ENCODE measurements at regions of chr9 and their contacts with region 1.

Region 1: DNA sequence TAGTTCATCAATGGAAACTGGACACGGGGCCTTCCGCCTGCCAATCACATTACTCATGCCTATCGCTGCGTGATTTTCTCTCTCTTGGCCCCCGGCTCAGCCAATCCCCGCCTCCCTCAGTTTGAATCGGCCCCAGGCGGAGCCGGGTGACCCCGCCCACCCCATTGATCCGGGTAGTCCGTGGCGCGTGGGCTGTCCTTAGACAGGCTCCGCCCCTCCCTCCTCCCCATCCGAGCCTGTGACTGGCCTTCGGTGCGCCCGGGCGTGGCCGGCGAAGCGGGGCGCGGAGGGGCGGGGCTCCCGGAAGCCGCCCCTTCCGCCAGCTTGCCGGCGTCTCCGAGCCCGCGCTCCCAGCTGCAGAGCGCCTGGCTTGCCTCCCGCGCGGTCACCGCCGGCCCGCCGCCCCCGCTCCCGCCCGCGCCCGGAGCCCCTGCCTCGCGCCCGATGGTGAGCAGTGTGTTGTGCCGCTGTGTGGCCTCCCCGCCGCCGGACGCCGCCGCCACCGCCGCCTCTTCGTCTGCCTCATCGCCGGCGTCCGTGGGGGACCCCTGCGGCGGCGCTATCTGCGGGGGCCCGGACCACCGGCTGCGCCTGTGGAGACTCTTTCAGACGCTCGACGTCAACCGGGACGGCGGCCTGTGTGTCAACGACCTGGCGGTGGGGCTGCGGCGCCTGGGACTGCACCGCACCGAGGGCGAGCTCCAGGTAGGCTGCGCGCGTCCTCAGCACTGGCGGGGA is at the start of gene SLC25A25:
- DNase-seq: peak; percentile 100
- ATAC-seq: peak; percentile 82
- H3K4me3 ChIP-seq: peak within 1 kb of the TSS; percentile 74 to 100 (median 98)
- H3K4me3 Mint-ChIP-seq: no peak within 1 kb of the TSS
- H3K27ac ChIP-seq: peak within 1 kb of the TSS; percentile 82 to 95
- H3K27ac Mint-ChIP-seq: peak within 1 kb of the TSS; percentile 88
- H3K4me1 ChIP-seq: peaks cover 59 to 74% of the 10 kb centered on the region in 2 donors
- H3K4me1 Mint-ChIP-seq: peaks cover 58% of the 10 kb centered on the region
- H3K27me3 ChIP-seq: no peaks in the 10 kb centered on the region
- H3K27me3 Mint-ChIP-seq: no peaks in the 10 kb centered on the region
- CTCF ChIP-seq: no peak
- total RNA-seq, gene SLC25A25: 12.1 and 12.4 TPM in 2 replicates

Region 2: GRCh38 chr9:127450830-127451724 is 617.0 kb before region 1 on chr9 and contains the starts of genes LRSAM1 and RPL12:
- CTCF ChIA-PET with region 1: no interaction called
- POLR2A ChIA-PET with region 1: no interaction called
- intact Hi-C with region 1: loop called (anchors 5 kb)
- DNase-seq: peak; percentile 98
- ATAC-seq: peak; percentile 79
- H3K4me3 ChIP-seq: peak within 1 kb of the TSS; percentile 73 to 92 (median 82)
- H3K4me3 Mint-ChIP-seq: peak within 1 kb of the TSS; percentile 97
- H3K27ac ChIP-seq: peak within 1 kb of the TSS; percentile 84 to 85
- H3K27ac Mint-ChIP-seq: peak within 1 kb of the TSS; percentile 98
- H3K4me1 ChIP-seq: peaks cover 28 to 46% of the 10 kb centered on the region in 2 donors
- H3K4me1 Mint-ChIP-seq: peaks cover 58% of the 10 kb centered on the region
- H3K27me3 ChIP-seq: no peaks in the 10 kb centered on the region
- H3K27me3 Mint-ChIP-seq: no peaks in the 10 kb centered on the region
- CTCF ChIP-seq: peak; percentile 26
- total RNA-seq, gene LRSAM1: 31.5 and 39.8 TPM in 2 replicates
- total RNA-seq, gene RPL12: 1,232 and 1,334 TPM in 2 replicates

Region 3: DNA sequence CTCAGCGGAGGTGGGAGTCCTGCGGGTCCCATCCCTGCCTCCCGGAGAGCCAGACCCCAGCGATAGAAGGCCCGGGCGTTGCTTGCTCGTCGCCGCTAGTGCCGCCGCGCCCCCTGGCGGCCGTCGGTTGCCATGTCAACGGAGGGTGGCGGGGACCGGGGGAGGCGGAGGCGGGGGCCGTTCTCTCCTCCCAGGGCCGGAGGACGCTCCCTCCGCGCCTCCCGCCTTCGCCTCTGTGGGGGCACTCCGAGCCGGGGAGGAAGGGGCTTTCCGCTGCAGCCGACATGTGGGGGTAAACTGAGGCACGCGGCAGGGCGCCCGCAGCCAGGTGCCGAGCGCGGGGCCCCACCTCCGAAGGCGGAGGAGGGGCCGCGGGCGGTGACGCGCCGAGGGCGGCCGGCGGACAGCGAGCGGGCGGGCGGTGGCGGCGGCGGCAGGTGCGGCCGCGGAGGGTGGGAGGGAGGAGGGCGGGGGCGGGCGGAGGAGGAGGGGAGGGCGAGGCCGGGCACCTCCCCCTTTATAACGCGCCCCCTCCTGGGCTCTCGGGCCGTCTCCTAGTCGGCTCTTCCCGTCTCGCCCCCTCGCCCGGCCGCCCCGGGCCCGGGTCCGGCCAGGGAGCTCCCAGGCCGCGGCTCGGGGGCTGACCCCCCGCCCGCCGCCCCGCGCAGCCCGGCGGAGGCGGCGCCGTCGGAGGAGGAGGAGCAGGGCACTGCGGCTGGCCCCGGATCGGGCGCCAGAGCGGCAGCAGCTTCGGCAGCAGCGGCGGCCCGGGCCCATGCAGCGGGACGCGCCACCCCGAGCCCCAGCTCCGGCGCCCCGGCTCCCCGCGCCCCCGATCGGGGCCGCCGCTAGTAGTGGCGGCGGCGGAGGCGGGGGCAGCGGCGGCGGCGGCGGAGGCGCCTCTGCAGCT is 282.8 kb before region 1 on chr9:
- CTCF ChIA-PET with region 1: no interaction called
- POLR2A ChIA-PET with region 1: no interaction called
- intact Hi-C with region 1: loop called (anchors 5 kb)
- DNase-seq: peak; percentile 95
- ATAC-seq: peak; percentile 62
- H3K4me3 ChIP-seq: peak overlapping the region in 4 of 5 experiments; percentile 48 to 99 (median 92)
- H3K4me3 Mint-ChIP-seq: peak overlapping the region; percentile 90
- H3K27ac ChIP-seq: peak overlapping the region; percentile 91 to 95
- H3K27ac Mint-ChIP-seq: peak overlapping the region; percentile 98
- H3K4me1 ChIP-seq: peaks cover 44 to 60% of the 10 kb centered on the region in 2 donors
- H3K4me1 Mint-ChIP-seq: peaks cover 56% of the 10 kb centered on the region
- H3K27me3 ChIP-seq: no peaks in the 10 kb centered on the region
- H3K27me3 Mint-ChIP-seq: no peaks in the 10 kb centered on the region
- CTCF ChIP-seq: peak; percentile 80

Region 4: DNA sequence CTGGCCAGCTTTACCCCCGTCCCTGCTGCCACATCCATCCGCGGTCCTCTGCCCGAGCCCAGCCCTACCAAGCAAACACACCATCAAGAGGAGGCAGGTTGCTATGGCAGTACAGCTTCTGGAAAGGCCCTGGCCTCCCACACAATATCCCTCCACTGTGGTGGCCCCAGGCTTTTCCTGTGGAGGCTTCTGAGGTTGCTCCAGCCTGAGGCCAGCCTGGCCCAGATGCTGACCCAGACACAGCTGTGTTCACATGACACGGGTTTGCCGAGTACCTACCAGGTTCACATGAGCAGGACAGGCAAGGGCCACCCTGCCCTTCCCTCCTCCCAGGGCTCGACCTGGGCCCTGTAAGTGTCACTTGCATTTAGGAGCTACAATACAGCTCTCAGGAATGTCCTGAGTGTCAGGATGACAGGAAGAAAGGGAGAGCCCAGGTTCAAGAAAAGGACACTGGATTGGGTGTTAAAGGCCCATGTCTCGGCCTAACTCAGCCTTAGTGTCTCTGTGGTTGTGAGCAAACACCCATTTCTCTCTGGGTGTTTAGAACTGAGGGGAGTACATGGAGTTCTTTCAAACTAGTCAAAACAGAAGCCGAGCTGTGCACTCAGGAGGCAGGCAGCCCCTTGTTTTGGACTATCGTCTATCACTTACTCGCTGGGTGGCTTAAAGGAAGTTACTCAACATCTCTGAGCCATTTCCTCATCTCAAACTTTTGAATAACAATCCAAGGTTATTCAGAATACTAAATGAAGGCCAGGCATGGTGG is 41.1 kb before region 1 on chr9:
- CTCF ChIA-PET with region 1: no interaction called
- POLR2A ChIA-PET with region 1: no interaction called
- intact Hi-C with region 1: loop called (anchors 5 kb)
- DNase-seq: no peak
- ATAC-seq: peak; percentile 4
- H3K4me3 ChIP-seq: peak overlapping the region in 1 of 5 experiments; percentile 22
- H3K4me3 Mint-ChIP-seq: peak overlapping the region; percentile 81
- H3K27ac ChIP-seq: peak overlapping the region; percentile 88 to 100
- H3K27ac Mint-ChIP-seq: peak overlapping the region; percentile 96
- H3K4me1 ChIP-seq: peaks cover 73 to 94% of the 10 kb centered on the region in 2 donors
- H3K4me1 Mint-ChIP-seq: peaks cover 78% of the 10 kb centered on the region
- H3K27me3 ChIP-seq: no peaks in the 10 kb centered on the region
- H3K27me3 Mint-ChIP-seq: no peaks in the 10 kb centered on the region
- CTCF ChIP-seq: no peak

Region 5: GRCh38 chr9:128081056-128081455 is 13.0 kb after region 1 on chr9:
- CTCF ChIA-PET with region 1: interaction called, 11 read pairs
- POLR2A ChIA-PET with region 1: interaction called, 6 read pairs
- intact Hi-C with region 1: no loop called
- DNase-seq: no peak
- ATAC-seq: no peak
- H3K4me3 ChIP-seq: no peak overlapping the region
- H3K4me3 Mint-ChIP-seq: no peak overlapping the region
- H3K27ac ChIP-seq: no peak overlapping the region
- H3K27ac Mint-ChIP-seq: no peak overlapping the region
- H3K4me1 ChIP-seq: peaks cover 3 to 4% of the 10 kb centered on the region in 2 donors
- H3K4me1 Mint-ChIP-seq: peaks cover 29% of the 10 kb centered on the region
- H3K27me3 ChIP-seq: no peaks in the 10 kb centered on the region
- H3K27me3 Mint-ChIP-seq: no peaks in the 10 kb centered on the region
- CTCF ChIP-seq: no peak

Region 6: GRCh38 chr9:128117613-128118471 is 49.8 kb after region 1 on chr9:
- CTCF ChIA-PET with region 1: interaction called, 8 read pairs
- POLR2A ChIA-PET with region 1: interaction called, 7 read pairs
- intact Hi-C with region 1: loop called (anchors 1 kb)
- DNase-seq: peak; percentile 94
- ATAC-seq: peak; percentile 52
- H3K4me3 ChIP-seq: no peak overlapping the region
- H3K4me3 Mint-ChIP-seq: no peak overlapping the region
- H3K27ac ChIP-seq: no peak overlapping the region
- H3K27ac Mint-ChIP-seq: peak overlapping the region; percentile 78
- H3K4me1 ChIP-seq: peaks cover 37 to 42% of the 10 kb centered on the region in 2 donors
- H3K4me1 Mint-ChIP-seq: peaks cover 38% of the 10 kb centered on the region
- H3K27me3 ChIP-seq: no peaks in the 10 kb centered on the region
- H3K27me3 Mint-ChIP-seq: no peaks in the 10 kb centered on the region
- CTCF ChIP-seq: peak; percentile 100

Region 7: DNA sequence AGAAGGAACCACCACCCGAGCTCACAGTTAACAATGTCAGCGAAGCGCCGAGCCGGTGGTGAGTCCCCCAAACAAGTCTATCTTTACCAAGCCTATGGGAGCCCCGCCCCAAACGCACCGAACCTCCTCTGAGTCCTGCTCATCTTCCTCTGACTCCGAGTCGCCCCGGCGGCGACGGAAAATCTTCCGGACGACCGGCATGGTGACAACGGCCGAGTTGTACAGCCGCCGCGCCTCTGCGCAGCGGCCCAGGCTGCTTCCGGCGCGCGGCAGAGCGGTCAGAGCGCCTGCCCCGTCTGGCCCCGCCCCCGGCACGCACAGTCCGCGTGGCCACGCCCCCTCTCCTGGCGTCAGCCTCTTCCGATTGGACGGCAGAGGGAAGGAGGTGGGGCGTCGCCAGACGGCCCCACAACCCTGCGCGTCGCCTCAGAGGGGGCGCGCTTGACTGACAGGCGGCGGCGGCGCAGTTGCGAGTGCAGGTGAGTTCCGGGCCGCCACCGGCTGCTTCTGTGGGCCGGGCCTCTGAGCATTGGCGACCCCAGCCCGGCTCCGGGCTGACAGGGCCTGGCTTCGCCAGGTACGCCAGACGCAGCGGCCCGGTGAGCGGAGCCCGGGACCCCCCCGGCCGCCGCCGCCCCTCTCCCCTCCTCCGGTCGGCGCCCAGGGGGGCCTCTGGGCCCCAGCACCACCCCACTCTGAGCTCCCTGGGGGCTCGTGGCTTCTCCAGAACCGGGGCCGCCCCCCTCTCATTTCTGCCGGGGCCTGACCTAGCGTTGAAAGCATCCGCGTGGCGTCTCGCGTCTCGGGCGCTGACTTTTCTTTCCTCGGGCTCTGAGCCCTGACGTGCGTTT is 1767.2 kb after region 1 on chr9 and contains the starts of genes C9orf78 and USP20:
- CTCF ChIA-PET with region 1: no interaction called
- POLR2A ChIA-PET with region 1: no interaction called
- intact Hi-C with region 1: loop called (anchors 10 kb)
- DNase-seq: peak; percentile 99
- ATAC-seq: peak; percentile 95
- H3K4me3 ChIP-seq: peak within 1 kb of the TSS; percentile 75 to 98 (median 85)
- H3K4me3 Mint-ChIP-seq: peak within 1 kb of the TSS; percentile 98
- H3K27ac ChIP-seq: peak within 1 kb of the TSS; percentile 85 to 92
- H3K27ac Mint-ChIP-seq: peak within 1 kb of the TSS; percentile 99
- H3K4me1 ChIP-seq: peaks cover 22 to 35% of the 10 kb centered on the region in 2 donors
- H3K4me1 Mint-ChIP-seq: peaks cover 51% of the 10 kb centered on the region
- H3K27me3 ChIP-seq: no peaks in the 10 kb centered on the region
- H3K27me3 Mint-ChIP-seq: no peaks in the 10 kb centered on the region
- CTCF ChIP-seq: no peak
- total RNA-seq, gene C9orf78: 42.8 and 43.6 TPM in 2 replicates
- total RNA-seq, gene USP20: 49.5 and 52.2 TPM in 2 replicates

Measured in B cell (primary cell).